Heart right ventricle (tissue), 16 donors: ENCODE measurements at regions of chr1 and their contacts with region 1.

Region 1: GRCh38 chr1:24018611-24019580 is 38.8 kb upstream of the SRSF10 start:
- DNase-seq: peak; percentile 93 to 99
- ATAC-seq: peak; percentile 83 to 92 (median 89)
- H3K4me3 ChIP-seq: peak overlapping the region in 6 of 10 donors; percentile 5 to 11 (median 10)
- H3K27ac ChIP-seq: peak overlapping the region; percentile 74 to 97 (median 92)
- H3K4me1 ChIP-seq: peaks cover 52 to 85% (median 68%) of the 10 kb centered on the region in 9 donors
- H3K27me3 ChIP-seq: no peaks in the 10 kb centered on the region
- CTCF ChIP-seq: peak in 1 of 9 donors; percentile 11

Region 2: DNA sequence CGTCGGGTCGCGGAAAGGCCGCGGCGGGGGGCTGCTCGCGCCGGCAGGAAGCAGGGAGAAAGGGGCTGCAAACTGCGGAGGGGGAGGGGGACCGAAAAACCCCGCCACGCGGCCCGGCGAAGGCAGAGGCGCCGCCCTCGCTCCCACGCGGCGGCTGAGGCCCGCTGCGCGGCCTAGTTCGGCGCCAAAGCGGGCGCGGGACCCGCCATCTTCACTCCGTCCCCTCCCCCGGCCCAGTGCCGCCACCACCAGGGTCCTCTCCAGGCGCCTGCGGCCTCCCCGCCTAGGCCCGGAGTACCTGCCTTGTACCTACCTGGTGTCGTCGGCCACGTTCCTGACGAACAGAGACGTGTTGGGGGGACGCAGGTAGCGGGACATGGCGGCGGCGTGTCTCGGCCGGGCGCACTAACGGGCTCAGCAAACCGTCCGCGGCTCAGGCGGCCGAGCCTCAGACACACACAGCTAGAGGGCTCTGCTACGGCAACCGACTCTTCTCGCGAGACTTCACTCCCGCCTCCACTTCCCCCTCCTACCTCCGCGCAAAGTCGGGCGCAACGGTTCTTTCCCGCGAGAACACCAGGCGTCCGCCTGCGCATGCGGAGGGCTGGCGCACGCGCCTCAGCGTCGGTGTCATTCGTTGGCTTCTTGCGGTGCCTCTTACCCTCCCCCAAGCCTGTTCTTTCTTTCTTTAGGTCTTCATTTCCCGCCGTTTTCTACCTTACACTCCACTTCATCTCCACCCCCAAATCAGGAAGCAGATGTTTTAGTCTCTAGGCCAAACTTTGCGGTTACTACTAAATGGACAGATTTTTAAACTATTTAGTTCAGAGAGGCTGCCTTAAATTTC is 38.8 kb before region 1 on chr1 and contains the start of gene SRSF10:
- intact Hi-C with region 1: loop called in 8 of 10 experiments (anchors 2 to 5 kb)
- DNase-seq: peak; percentile 98
- ATAC-seq: peak; percentile 99 to 100 (median 99)
- H3K4me3 ChIP-seq: peak within 1 kb of the TSS; percentile 64 to 96 (median 86)
- H3K27ac ChIP-seq: peak within 1 kb of the TSS; percentile 63 to 99 (median 96)
- H3K4me1 ChIP-seq: peaks cover 4 to 57% (median 49%) of the 10 kb centered on the region in 9 donors
- H3K27me3 ChIP-seq: no peaks in the 10 kb centered on the region
- CTCF ChIP-seq: peak in 8 of 9 donors; percentile 18 to 81 (median 35)
- total RNA-seq, gene SRSF10: 40.7 to 65.8 (median 52.8) TPM